MCF 10A (cell line): ENCODE measurements at regions of chr20 and their contacts with region 1.

Region 1: DNA sequence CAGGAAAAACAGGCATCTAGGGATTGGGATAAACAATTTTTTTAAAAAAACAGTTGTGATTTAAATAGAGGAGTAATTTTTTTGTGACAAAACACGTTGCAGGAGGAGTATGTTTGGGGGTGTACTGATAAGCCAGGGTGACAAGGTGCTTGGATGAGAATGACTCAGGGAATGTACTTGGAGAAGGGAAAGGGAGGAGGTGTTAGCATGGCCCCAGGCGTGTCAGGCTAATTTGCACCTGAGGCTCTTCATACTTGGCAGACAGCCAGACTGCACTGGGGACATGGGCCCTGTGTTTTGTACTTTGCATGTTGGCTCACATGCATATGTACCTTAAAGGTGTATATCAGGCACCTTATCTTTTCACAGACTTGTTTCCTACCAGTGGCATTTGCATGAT is 22.8 kb downstream of the PANK2 start:
- DNase-seq: no peak
- H3K4me3 Mint-ChIP-seq: no peak overlapping the region
- H3K27ac Mint-ChIP-seq: no peak overlapping the region
- H3K4me1 Mint-ChIP-seq: peaks cover 7% of the 10 kb centered on the region
- H3K27me3 Mint-ChIP-seq: no peaks in the 10 kb centered on the region
- CTCF ChIP-seq: no peak

Region 2: GRCh38 chr20:3788685-3789155 is 123.2 kb before region 1 on chr20:
- CTCF ChIA-PET with region 1: no interaction called
- POLR2A ChIA-PET with region 1: no interaction called
- intact Hi-C with region 1: no loop called
- DNase-seq: no peak
- H3K4me3 Mint-ChIP-seq: no peak overlapping the region
- H3K27ac Mint-ChIP-seq: peak overlapping the region; percentile 25
- H3K4me1 Mint-ChIP-seq: peaks cover 28% of the 10 kb centered on the region
- H3K27me3 Mint-ChIP-seq: no peaks in the 10 kb centered on the region
- CTCF ChIP-seq: no peak

Region 3: DNA sequence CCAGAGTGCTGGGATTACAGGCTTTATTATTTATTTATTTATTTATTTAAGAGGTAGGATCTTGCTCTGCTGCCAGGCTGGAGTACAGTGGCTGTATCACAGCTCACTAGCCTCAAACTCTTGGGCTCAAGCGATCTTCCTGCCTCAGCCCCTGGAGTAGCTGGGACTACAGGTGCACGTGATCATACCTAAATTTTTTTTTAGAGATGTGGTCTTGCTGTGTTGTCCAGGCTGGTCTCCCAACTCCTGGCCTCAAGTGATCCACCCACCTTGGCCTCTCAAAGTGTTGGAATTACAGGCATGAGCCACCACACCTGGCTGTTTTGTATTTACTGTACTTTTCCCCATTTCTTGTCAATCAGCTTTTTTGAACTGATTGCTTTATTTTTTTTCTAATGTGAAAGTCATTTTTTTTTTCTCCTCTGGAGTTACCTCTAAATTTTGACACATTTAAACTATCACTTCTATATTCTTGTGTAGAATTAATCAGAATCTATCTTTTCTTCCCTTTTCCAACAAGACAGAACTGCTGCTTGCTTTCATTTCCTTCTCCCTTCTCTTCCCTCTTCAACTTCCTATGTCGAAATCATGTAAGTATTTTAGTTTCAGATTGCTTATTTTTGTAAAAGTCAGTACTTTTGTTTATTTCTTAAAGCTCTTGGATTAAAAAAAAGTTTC is 10.8 kb before region 1 on chr20:
- CTCF ChIA-PET with region 1: interaction called, 5 read pairs
- POLR2A ChIA-PET with region 1: interaction called, 10 read pairs
- intact Hi-C with region 1: no loop called
- DNase-seq: no peak
- H3K4me3 Mint-ChIP-seq: no peak overlapping the region
- H3K27ac Mint-ChIP-seq: peak overlapping the region; percentile 74
- H3K4me1 Mint-ChIP-seq: peaks cover 39% of the 10 kb centered on the region
- H3K27me3 Mint-ChIP-seq: no peaks in the 10 kb centered on the region
- CTCF ChIP-seq: no peak

Region 4: DNA sequence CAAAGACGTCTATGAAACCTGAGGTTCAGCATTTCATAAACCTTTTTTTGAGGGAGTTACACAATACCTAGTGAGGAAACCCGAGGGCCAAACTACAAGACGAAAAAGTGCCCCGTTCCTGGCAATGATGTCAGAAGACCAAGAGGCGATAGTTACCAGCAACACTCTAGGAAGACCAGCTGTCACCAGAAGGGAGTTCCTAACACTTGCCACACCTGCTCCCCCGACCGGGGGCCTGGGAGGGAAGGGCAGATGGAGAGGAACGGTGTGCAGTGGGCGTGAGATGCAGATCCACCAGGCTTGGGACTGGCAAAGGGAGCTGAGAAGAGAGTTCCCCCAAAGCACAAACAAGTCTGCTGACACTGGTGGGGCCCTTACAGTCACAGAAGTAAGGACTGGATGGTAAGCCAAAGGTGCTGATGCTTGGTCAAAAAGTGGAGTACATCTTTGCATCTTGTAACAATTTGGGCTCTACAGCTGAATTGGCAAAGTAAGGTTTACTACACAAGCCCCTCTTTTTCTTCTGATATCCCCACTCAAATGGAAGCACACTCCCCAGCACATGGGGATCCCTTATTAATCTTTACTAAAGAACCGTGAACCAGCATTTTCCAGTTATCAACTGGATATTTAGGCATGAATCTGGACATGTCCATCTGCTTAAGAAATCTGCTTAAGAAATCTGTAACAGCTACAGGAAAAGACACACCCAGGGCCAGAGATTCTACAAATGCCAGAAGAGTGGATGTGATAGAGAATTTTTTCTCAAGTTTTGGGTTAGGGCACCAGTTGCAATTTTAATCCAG is 15.7 kb after region 1 on chr20:
- CTCF ChIA-PET with region 1: interaction called, 5 read pairs
- POLR2A ChIA-PET with region 1: interaction called, 13 read pairs
- intact Hi-C with region 1: no loop called
- DNase-seq: peak; percentile 77
- H3K4me3 Mint-ChIP-seq: peak overlapping the region; percentile 8
- H3K27ac Mint-ChIP-seq: peak overlapping the region; percentile 80
- H3K4me1 Mint-ChIP-seq: peaks cover 57% of the 10 kb centered on the region
- H3K27me3 Mint-ChIP-seq: no peaks in the 10 kb centered on the region
- CTCF ChIP-seq: no peak